ENCODE measurements at regions of chr1 and their contacts with region 1.

Region 1: GRCh38 chr1:86499987-86500593 is 31.4 kb downstream of the CLCA1 start:
- DNase-seq: peak in 2 of 9 experiments; percentile 43 to 60
- ATAC-seq: peak; percentile 63
- H3K4me3 ChIP-seq: no peak overlapping the region
- H3K4me3 Mint-ChIP-seq: no peak overlapping the region
- H3K27ac ChIP-seq: no peak overlapping the region
- H3K27ac Mint-ChIP-seq: no peak overlapping the region
- H3K4me1 ChIP-seq: peaks cover 7% of the 10 kb centered on the region
- H3K4me1 Mint-ChIP-seq: peaks cover 8% of the 10 kb centered on the region
- H3K27me3 ChIP-seq: peaks cover 0 to 2% of the 10 kb centered on the region in 2 experiments
- H3K27me3 Mint-ChIP-seq: peaks cover 10% of the 10 kb centered on the region
- CTCF ChIP-seq: peak; percentile 100

Region 2: DNA sequence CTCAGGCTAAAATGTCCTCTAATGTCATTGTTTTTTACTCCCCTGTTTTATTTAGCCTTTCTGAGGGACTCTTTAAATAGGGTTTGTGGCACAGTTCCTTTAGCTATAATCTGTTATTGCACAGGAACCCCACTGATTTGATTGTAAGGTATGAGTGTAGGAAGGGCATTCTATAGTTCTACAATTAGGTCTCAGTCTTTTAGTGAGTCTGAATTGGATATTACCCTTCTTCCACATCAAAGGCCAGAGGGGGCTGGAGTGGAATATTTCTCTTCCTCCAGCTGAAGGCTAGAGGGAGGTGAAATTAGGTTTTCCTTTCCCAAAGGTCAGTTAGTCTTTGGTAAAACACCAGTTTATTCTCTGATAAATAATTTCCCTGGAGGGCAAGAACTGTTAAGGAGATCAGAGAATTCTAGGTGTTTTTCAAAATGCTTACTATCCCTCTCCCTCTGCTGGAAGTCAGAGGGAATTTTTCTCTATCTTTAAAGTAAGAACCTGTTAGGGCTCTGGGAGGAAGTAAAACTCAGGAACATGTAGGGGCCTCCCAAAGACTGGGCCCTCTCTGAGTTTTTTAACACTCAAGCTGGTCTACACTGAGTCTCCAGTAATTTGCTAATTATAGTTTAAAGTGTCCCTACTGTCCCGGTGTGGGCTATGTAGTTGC is 615.6 kb before region 1 on chr1:
- CTCF ChIA-PET with region 1: no interaction called
- POLR2A ChIA-PET with region 1: no interaction called
- intact Hi-C with region 1: no loop called
- DNase-seq: no peak
- ATAC-seq: no peak
- H3K4me3 ChIP-seq: no peak overlapping the region
- H3K4me3 Mint-ChIP-seq: no peak overlapping the region
- H3K27ac ChIP-seq: no peak overlapping the region
- H3K27ac Mint-ChIP-seq: no peak overlapping the region
- H3K4me1 ChIP-seq: no peaks in the 10 kb centered on the region
- H3K4me1 Mint-ChIP-seq: no peaks in the 10 kb centered on the region
- H3K27me3 ChIP-seq: no peaks in the 10 kb centered on the region
- H3K27me3 Mint-ChIP-seq: no peaks in the 10 kb centered on the region
- CTCF ChIP-seq: no peak

Region 3: DNA sequence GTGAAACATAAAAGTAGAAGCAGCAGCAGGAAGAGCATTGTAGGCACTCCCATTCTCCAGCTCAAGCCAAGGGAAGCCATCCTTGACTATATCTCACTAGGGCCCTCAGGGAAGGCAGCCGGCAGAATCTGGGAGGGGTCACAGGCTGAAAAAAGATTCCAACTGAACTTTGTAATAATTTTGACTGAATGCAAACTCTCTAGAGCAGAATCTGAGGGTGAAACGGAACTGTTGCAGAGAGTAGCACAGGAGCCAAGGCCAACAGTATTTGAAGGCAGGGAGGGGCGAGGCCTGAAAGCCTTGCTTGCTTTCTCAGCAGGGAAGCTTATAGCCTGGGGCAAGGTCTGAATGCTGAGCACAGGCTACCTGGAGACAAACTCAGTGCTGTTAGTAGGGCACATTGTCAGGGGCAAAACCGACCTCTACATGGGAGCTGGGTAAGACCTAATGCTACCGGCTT is 524.1 kb before region 1 on chr1:
- CTCF ChIA-PET with region 1: no interaction called
- POLR2A ChIA-PET with region 1: no interaction called
- intact Hi-C with region 1: no loop called
- DNase-seq: no peak
- ATAC-seq: no peak
- H3K4me3 ChIP-seq: no peak overlapping the region
- H3K4me3 Mint-ChIP-seq: no peak overlapping the region
- H3K27ac ChIP-seq: no peak overlapping the region
- H3K27ac Mint-ChIP-seq: no peak overlapping the region
- H3K4me1 ChIP-seq: no peaks in the 10 kb centered on the region
- H3K4me1 Mint-ChIP-seq: no peaks in the 10 kb centered on the region
- H3K27me3 ChIP-seq: no peaks in the 10 kb centered on the region
- H3K27me3 Mint-ChIP-seq: no peaks in the 10 kb centered on the region
- CTCF ChIP-seq: no peak

Region 4: GRCh38 chr1:86419277-86419903 is 80.7 kb before region 1 on chr1:
- CTCF ChIA-PET with region 1: interaction called, 9 read pairs
- POLR2A ChIA-PET with region 1: no interaction called
- intact Hi-C with region 1: loop called (anchors 1 to 2 kb)
- DNase-seq: peak; percentile 8 to 71 (median 48)
- ATAC-seq: peak; percentile 96
- H3K4me3 ChIP-seq: no peak overlapping the region
- H3K4me3 Mint-ChIP-seq: peak overlapping the region; percentile 64
- H3K27ac ChIP-seq: no peak overlapping the region
- H3K27ac Mint-ChIP-seq: peak overlapping the region; percentile 61
- H3K4me1 ChIP-seq: peaks cover 3% of the 10 kb centered on the region
- H3K4me1 Mint-ChIP-seq: peaks cover 5% of the 10 kb centered on the region
- H3K27me3 ChIP-seq: no peaks in the 10 kb centered on the region
- H3K27me3 Mint-ChIP-seq: peaks cover 3% of the 10 kb centered on the region
- CTCF ChIP-seq: peak; percentile 71

Region 5: DNA sequence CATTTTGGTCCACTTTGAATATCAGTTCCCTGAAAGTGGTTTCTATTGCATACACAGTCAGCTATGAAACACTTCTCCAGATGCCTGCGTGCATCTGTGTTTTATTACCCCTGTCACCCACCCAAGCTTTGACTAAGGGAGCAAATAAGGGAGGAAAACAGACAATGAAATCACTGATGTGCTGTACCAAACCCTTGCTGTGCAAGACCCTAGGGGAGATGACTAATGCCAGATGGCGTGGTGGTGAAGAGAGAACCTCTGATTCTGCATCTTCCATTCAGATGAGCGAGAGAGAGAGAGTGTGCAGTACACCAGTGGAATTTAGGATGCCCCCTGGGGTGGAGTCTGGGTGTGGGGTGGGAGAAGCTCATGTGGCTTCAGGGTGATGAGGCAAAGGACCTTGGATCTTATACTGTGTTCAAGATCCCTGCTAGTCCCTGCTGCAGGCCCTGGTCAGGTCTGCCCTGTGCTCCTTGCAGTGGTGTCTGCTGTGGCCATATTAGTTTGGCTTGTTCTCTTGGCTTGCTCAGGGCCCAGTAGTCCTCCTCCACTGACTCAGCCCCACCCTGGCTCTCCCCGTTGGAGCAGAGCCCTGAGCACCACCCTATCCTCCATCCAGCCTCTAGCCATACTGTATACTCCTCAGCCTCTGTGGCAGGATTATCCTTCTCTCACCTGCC is 12.8 kb before region 1 on chr1:
- CTCF ChIA-PET with region 1: interaction called, 15 read pairs
- POLR2A ChIA-PET with region 1: no interaction called
- intact Hi-C with region 1: no loop called
- DNase-seq: no peak
- ATAC-seq: no peak
- H3K4me3 ChIP-seq: no peak overlapping the region
- H3K4me3 Mint-ChIP-seq: no peak overlapping the region
- H3K27ac ChIP-seq: no peak overlapping the region
- H3K27ac Mint-ChIP-seq: no peak overlapping the region
- H3K4me1 ChIP-seq: no peaks in the 10 kb centered on the region
- H3K4me1 Mint-ChIP-seq: no peaks in the 10 kb centered on the region
- H3K27me3 ChIP-seq: no peaks in the 10 kb centered on the region
- H3K27me3 Mint-ChIP-seq: no peaks in the 10 kb centered on the region
- CTCF ChIP-seq: no peak

Region 6: GRCh38 chr1:86648255-86648654 is 148.2 kb after region 1 on chr1:
- CTCF ChIA-PET with region 1: no interaction called
- POLR2A ChIA-PET with region 1: no interaction called
- intact Hi-C with region 1: no loop called
- DNase-seq: no peak
- ATAC-seq: no peak
- H3K4me3 ChIP-seq: no peak overlapping the region
- H3K4me3 Mint-ChIP-seq: no peak overlapping the region
- H3K27ac ChIP-seq: no peak overlapping the region
- H3K27ac Mint-ChIP-seq: no peak overlapping the region
- H3K4me1 ChIP-seq: no peaks in the 10 kb centered on the region
- H3K4me1 Mint-ChIP-seq: no peaks in the 10 kb centered on the region
- H3K27me3 ChIP-seq: no peaks in the 10 kb centered on the region
- H3K27me3 Mint-ChIP-seq: peaks cover 7% of the 10 kb centered on the region
- CTCF ChIP-seq: no peak

Region 7: GRCh38 chr1:86741947-86742572 is 242.0 kb after region 1 on chr1:
- CTCF ChIA-PET with region 1: interaction called, 4 read pairs
- POLR2A ChIA-PET with region 1: no interaction called
- intact Hi-C with region 1: loop called (anchors 2 to 5 kb)
- DNase-seq: peak in 6 of 9 experiments; percentile 11 to 71 (median 48)
- ATAC-seq: no peak
- H3K4me3 ChIP-seq: no peak overlapping the region
- H3K4me3 Mint-ChIP-seq: no peak overlapping the region
- H3K27ac ChIP-seq: no peak overlapping the region
- H3K27ac Mint-ChIP-seq: no peak overlapping the region
- H3K4me1 ChIP-seq: peaks cover 20% of the 10 kb centered on the region
- H3K4me1 Mint-ChIP-seq: peaks cover 4% of the 10 kb centered on the region
- H3K27me3 ChIP-seq: no peaks in the 10 kb centered on the region
- H3K27me3 Mint-ChIP-seq: no peaks in the 10 kb centered on the region
- CTCF ChIP-seq: peak; percentile 83

Region 8: GRCh38 chr1:86926883-86927282 is 426.8 kb after region 1 on chr1:
- CTCF ChIA-PET with region 1: no interaction called
- POLR2A ChIA-PET with region 1: no interaction called
- intact Hi-C with region 1: no loop called
- DNase-seq: no peak
- ATAC-seq: no peak
- H3K4me3 ChIP-seq: no peak overlapping the region
- H3K4me3 Mint-ChIP-seq: no peak overlapping the region
- H3K27ac ChIP-seq: no peak overlapping the region
- H3K27ac Mint-ChIP-seq: no peak overlapping the region
- H3K4me1 ChIP-seq: no peaks in the 10 kb centered on the region
- H3K4me1 Mint-ChIP-seq: peaks cover 34% of the 10 kb centered on the region
- H3K27me3 ChIP-seq: no peaks in the 10 kb centered on the region
- H3K27me3 Mint-ChIP-seq: no peaks in the 10 kb centered on the region
- CTCF ChIP-seq: no peak

Region 9: GRCh38 chr1:87084244-87084836 is 584.2 kb after region 1 on chr1:
- CTCF ChIA-PET with region 1: no interaction called
- POLR2A ChIA-PET with region 1: no interaction called
- intact Hi-C with region 1: loop called (anchors 10 kb)
- DNase-seq: peak in 2 of 9 experiments; percentile 33 to 53
- ATAC-seq: peak; percentile 46
- H3K4me3 ChIP-seq: no peak overlapping the region
- H3K4me3 Mint-ChIP-seq: no peak overlapping the region
- H3K27ac ChIP-seq: no peak overlapping the region
- H3K27ac Mint-ChIP-seq: no peak overlapping the region
- H3K4me1 ChIP-seq: no peaks in the 10 kb centered on the region
- H3K4me1 Mint-ChIP-seq: peaks cover 4% of the 10 kb centered on the region
- H3K27me3 ChIP-seq: no peaks in the 10 kb centered on the region
- H3K27me3 Mint-ChIP-seq: no peaks in the 10 kb centered on the region
- CTCF ChIP-seq: peak; percentile 79